H1 (cell line): ENCODE measurements at regions of chr12 and their contacts with region 1.

Region 1: DNA sequence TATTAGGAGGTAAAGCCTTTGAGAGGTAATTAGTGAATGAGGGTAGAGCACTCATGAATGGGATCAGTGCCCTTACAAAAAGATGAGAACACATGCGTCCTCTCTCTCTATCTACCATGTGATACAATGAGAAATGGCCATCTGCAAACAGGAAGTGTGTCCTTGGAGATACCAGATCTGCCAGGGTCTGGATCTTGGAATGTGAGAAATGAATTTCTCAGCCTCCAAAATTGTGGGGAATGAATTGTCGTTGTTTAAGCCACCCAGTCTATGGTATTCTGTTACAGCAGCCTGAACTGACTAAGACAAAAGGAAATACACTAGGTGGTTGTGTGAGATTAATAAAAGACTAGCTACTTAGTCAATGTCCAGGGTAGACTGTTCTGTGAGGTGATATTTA is 366.6 kb downstream of the NELL2 start:
- DNase-seq: no peak
- H3K4me3 ChIP-seq: no peak overlapping the region
- H3K27ac ChIP-seq: no peak overlapping the region
- H3K4me1 ChIP-seq: no peaks in the 10 kb centered on the region
- H3K27me3 ChIP-seq: no peaks in the 10 kb centered on the region
- CTCF ChIP-seq: no peak
- EP300 ChIP-seq: no peak
- POLR2A ChIP-seq: no peak
- RAD21 ChIP-seq: no peak

Region 2: GRCh38 chr12:44497042-44497441 is 12.4 kb before region 1 on chr12:
- CTCF ChIA-PET with region 1: interaction called, 11 read pairs
- POLR2A ChIA-PET with region 1: no interaction called
- DNase-seq: no peak
- H3K4me3 ChIP-seq: no peak overlapping the region
- H3K27ac ChIP-seq: no peak overlapping the region
- H3K4me1 ChIP-seq: no peaks in the 10 kb centered on the region
- H3K27me3 ChIP-seq: no peaks in the 10 kb centered on the region
- CTCF ChIP-seq: peak in 2 of 3 experiments; percentile 58 to 61; a peak in 3 of 4 replicates
- EP300 ChIP-seq: no peak
- POLR2A ChIP-seq: no peak
- RAD21 ChIP-seq: peak; percentile 60 to 78

Region 3: DNA sequence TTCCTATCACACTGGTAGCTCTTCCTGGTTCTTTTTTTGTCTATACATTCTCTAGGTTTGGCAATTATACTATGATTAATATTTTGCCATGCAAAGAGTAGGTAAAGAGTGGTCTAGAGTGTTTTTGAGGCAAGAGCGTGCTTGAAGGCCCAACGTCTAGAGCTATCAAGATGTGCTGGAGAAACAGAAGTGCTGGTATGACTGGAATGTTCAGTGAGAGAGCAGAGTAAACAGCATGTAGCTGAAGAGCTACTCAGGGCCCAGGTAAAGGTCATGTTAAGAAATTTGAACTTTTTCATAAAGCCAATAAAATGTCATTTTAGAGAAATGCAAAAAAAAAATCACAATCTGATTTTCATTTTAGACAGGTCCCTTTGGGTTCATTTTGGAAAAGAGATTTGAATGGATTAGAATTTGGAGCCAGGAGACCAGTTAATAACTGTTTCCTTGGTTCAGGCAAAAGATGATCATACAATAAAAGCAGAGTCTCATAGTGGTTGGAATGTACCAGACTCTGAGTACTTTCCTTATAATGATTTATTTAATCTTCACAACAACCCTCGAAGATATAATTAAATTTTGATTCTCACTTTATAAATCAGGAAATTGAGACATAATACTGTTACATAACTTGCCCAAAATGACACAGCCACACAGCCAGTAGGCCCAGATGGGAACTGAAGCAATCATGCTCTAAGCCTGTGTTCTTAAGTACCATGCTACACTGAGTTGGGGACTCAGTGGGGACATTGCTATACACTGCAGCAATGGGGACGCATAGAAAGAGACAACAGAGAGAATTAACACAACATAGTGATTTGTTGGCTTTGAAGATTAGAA is 16.6 kb after region 1 on chr12:
- CTCF ChIA-PET with region 1: interaction called, 15 read pairs
- POLR2A ChIA-PET with region 1: no interaction called
- DNase-seq: no peak
- H3K4me3 ChIP-seq: no peak overlapping the region
- H3K27ac ChIP-seq: no peak overlapping the region
- H3K4me1 ChIP-seq: peaks cover 0 to 4% (median 3%) of the 10 kb centered on the region in 4 experiments; a peak in 3 of 7 replicates
- H3K27me3 ChIP-seq: no peaks in the 10 kb centered on the region
- CTCF ChIP-seq: no peak
- EP300 ChIP-seq: no peak
- POLR2A ChIP-seq: no peak
- RAD21 ChIP-seq: no peak